Thyroid gland (tissue), 4 donors: ENCODE measurements at regions of chr16 and their contacts with region 1.

Region 1: DNA sequence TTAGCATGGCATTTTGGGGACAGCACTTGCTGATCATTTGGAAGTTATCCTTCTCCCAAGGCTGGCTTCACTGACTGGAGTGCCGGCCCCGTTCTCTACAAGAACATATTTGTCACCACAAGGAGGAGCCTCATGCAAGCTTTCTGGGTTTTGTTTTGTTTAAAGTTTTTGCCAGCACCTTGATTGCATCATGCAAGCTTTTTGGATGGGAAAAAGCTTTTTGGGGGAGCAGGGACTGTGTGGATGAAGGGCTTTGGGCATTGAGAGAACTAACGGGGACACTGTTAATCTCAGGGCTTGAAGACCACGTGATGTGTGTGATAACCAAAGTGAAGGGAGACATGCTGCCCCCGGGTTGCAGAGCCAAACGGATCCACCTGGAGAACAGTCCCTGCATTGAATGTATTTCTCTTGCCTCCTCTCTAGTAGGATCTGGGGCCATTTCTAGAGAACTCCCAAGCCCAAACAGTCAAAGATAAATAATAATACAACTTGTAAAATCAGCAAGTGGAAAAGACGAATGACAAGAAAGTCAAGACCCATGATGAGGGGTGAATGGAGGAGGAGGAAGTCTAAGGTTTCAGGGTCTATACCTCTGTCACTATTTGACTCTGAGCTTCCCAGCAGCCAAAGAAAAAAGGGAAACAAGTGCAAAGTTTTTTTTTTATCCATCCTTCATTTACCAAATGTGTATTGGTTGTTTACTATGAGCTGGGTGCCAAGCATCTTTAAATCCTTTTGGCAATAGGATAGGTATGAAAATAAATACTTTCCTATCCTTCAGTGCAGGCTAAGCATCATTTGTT is 17.2 kb downstream of the TMEM114 start:
- DNase-seq: no peak
- H3K4me3 ChIP-seq: no peak overlapping the region
- H3K27ac ChIP-seq: no peak overlapping the region
- H3K4me1 ChIP-seq: peaks cover 0 to 3% of the 10 kb centered on the region in 2 donors
- H3K27me3 ChIP-seq: no peaks in the 10 kb centered on the region
- CTCF ChIP-seq: peak in 1 of 6 experiments; percentile 28
- POLR2A ChIP-seq: no peak

Region 2: DNA sequence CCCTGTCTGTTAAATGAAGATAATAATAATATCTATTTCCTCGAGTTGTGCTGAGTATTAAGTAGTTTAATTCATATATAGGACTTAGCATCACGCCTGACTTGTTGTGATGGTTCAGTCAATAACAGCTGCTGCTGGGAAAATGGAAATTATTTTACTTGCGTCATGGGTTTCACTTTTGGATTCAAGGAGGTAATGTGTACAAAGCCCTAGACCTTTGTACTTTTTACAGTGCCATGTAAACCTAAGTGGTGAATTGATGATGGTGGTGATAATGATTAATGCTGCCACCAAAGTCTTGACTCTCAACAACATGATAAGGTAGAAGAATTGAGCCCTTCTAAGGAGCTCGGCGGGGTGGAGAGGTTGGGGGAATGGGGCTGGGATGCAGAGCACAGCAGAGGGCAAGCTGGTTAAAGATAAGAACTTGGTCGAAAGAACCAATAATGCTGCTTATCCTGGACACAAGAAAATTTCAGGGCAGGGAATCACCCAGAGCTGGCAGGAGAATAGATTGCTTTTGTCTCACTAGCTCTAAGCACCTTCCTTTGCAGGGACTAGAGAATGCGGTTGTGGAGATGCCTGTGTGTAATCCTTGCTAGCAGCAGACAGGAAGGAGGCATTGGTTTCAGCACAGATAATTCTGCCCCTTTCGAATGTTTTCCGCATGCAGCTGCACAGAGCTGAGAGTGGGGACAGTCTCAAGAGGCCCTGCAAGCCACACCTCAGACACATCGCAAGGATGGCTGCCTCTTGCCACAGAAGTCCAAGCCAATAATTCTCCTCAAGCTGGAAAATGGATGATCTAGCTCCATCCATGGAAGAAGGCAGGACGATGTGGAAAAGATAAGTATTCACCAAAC is 169.9 kb before region 1 on chr16:
- intact Hi-C with region 1: no loop called
- DNase-seq: no peak
- H3K4me3 ChIP-seq: no peak overlapping the region
- H3K27ac ChIP-seq: no peak overlapping the region
- H3K4me1 ChIP-seq: no peaks in the 10 kb centered on the region
- H3K27me3 ChIP-seq: no peaks in the 10 kb centered on the region
- CTCF ChIP-seq: no peak
- POLR2A ChIP-seq: no peak

Region 3: GRCh38 chr16:8644211-8645140 is 71.4 kb after region 1 on chr16:
- intact Hi-C with region 1: loop called (anchors 10 kb)
- DNase-seq: no peak
- H3K4me3 ChIP-seq: no peak overlapping the region
- H3K27ac ChIP-seq: no peak overlapping the region
- H3K4me1 ChIP-seq: no peaks in the 10 kb centered on the region
- H3K27me3 ChIP-seq: no peaks in the 10 kb centered on the region
- CTCF ChIP-seq: no peak
- POLR2A ChIP-seq: no peak

Region 4: GRCh38 chr16:9008601-9009260 is 435.6 kb after region 1 on chr16:
- intact Hi-C with region 1: loop called (anchors 10 kb)
- DNase-seq: peak; percentile 69 to 77
- H3K4me3 ChIP-seq: no peak overlapping the region
- H3K27ac ChIP-seq: no peak overlapping the region
- H3K4me1 ChIP-seq: peaks cover 4 to 9% of the 10 kb centered on the region in 2 donors
- H3K27me3 ChIP-seq: no peaks in the 10 kb centered on the region
- CTCF ChIP-seq: peak; percentile 34 to 83 (median 70)
- POLR2A ChIP-seq: no peak